ENCODE measurements at regions of chr1 and their contacts with region 1.

Region 1: GRCh38 chr1:27097484-27097917 is 57.4 kb downstream of the SLC9A1 start:
- DNase-seq: peak; percentile 60 to 71
- ATAC-seq: peak; percentile 69

Region 2: GRCh38 chr1:26826261-26827105 is 271.0 kb before region 1 on chr1 and contains the start of gene ZDHHC18:
- intact Hi-C with region 1: no loop called
- DNase-seq: peak; percentile 77 to 81
- ATAC-seq: peak; percentile 84
- total RNA-seq, gene ZDHHC18: 22.2 to 25.8 TPM

Region 3: GRCh38 chr1:26999440-26999987 is 98.0 kb before region 1 on chr1:
- intact Hi-C with region 1: loop called in 1 of 2 experiments (anchors 5 kb)
- DNase-seq: peak; percentile 37 to 80
- ATAC-seq: no peak

Region 4: GRCh38 chr1:27044613-27045151 is 52.8 kb before region 1 on chr1:
- intact Hi-C with region 1: loop called in 1 of 2 experiments (anchors 2 kb)
- DNase-seq: peak; percentile 78 to 92
- ATAC-seq: peak; percentile 94

Region 5: GRCh38 chr1:27306892-27307761 is 209.6 kb after region 1 on chr1:
- intact Hi-C with region 1: no loop called
- DNase-seq: peak in 1 of 2 donors; percentile 22
- ATAC-seq: peak; percentile 92

Region 6: DNA sequence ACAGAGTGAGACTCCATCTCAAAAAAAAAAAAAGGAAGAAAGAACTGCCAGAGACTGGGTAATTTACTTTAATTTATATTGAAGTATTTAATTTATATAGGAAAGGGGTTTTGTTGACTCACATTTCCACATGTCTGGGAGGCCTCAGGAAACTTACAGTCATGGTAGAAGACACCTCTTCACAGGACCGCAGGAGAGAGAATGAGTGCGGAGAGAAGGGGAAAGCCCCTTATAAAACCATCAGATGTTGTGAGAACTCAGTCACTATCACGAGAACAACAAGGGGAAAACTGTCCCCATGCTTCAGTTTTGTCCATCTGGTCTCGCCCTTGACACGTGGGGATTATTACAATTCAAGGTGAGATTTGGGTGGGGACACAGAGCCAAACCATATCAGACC is 707.3 kb after region 1 on chr1:
- intact Hi-C with region 1: no loop called
- DNase-seq: no peak
- ATAC-seq: no peak